ENCODE measurements at regions of chr7 and their contacts with region 1.

Region 1: DNA sequence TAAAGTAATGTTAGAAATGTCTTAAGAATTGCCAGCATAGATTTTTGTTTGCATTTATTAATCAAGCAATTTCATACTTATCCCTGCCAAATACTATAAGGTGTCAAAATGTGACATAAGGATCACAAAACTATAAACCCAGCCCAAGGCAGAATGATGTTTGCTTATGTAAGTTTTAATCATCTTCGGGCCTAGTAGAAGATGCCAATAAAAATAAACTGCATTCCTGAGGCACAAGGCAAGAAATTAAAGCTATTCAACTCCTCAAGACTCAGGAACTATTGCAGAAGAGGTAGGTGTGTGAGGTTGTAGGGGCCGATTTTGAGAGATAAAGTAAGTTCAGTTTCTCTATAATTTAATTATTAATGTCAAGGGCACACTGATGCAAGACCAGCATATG is 189.4 kb upstream of the AHR start:
- DNase-seq: no peak
- H3K4me3 ChIP-seq: no peak overlapping the region
- H3K27ac ChIP-seq: no peak overlapping the region
- H3K4me1 ChIP-seq: peaks cover 0 to 5% (median 2%) of the 10 kb centered on the region in 4 donors
- H3K27me3 ChIP-seq: no peaks in the 10 kb centered on the region
- CTCF ChIP-seq: no peak
- EP300 ChIP-seq: no peak
- POLR2A ChIP-seq: no peak

Region 2: DNA sequence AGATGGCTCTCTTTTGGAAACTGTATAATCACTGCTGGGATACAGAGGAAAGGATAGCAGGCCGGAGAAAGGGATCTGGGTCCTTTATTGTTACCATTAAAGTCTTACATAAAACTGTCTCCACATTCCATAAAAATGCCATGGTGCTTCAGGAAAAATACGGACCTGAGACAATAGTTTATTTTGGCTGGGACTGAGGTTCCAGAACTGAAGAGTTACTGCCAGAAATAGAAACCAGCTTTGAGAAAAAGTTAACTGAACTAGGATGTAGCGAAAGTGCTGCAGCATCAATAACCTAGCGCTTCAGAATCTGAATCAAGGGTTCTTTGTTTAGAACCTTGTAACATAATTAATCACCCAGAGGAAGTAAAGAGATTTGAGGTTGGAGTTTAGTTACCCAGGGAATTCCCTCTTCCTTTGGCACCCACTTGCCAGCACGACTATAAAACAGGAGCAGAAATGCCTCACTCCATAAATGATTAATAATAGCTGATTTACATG is 1460.5 kb before region 1 on chr7:
- in situ Hi-C with region 1: no loop called
- intact Hi-C with region 1: loop called (anchors 5 kb)
- DNase-seq: no peak
- H3K4me3 ChIP-seq: no peak overlapping the region
- H3K27ac ChIP-seq: peak overlapping the region in 3 of 4 donors; percentile 22 to 45 (median 37)
- H3K4me1 ChIP-seq: no peaks in the 10 kb centered on the region
- H3K27me3 ChIP-seq: no peaks in the 10 kb centered on the region
- CTCF ChIP-seq: no peak
- EP300 ChIP-seq: no peak
- POLR2A ChIP-seq: no peak

Region 3: DNA sequence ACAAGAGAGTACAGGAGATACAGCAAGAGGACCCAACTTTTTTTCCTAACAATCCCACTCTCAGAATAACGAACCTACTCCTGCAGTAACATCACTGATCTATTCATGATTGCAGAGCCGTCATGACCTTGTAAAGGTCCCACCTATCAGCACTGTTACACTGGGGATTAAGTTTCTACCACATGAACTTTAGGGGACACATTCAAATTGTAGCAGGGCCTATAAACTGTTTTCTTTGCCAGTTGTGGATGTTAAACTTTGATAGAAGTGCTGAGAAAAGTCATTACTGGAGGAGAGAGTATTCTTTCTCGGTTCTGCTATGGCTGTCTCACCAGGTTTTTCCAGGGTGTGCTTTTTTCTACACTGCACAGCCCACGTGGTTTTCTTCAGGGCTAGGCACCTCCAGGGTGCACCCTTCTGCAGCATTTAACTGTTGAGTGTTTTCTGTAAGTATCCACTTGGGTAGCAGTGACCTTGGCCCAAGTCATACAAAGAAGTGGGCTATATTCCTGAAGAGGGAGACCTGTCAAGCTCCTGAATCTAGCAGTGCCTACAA is 57.9 kb after region 1 on chr7:
- in situ Hi-C with region 1: no loop called
- intact Hi-C with region 1: no loop called
- DNase-seq: no peak
- H3K4me3 ChIP-seq: no peak overlapping the region
- H3K27ac ChIP-seq: no peak overlapping the region
- H3K4me1 ChIP-seq: no peaks in the 10 kb centered on the region
- H3K27me3 ChIP-seq: no peaks in the 10 kb centered on the region
- CTCF ChIP-seq: no peak
- EP300 ChIP-seq: no peak
- POLR2A ChIP-seq: no peak

Region 4: DNA sequence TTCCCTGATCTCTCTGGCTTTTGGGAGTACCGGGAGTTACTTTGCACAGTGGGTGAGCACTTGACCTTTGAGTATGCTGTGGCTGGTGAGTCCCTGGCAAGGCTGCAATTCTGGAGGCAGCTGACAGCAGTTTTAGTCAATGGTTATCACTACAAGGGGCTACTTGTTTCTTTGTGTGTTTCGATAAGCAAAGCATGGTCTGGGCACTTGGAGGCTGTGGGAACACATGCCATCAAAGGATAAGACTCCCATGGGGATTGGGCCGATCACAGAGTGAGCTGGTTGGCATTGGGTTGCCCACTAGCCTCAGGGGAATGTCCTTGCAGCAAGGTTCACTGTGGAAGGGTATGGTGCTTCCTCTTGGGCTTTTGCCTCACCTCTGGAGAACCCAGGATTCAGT is 623.1 kb after region 1 on chr7:
- in situ Hi-C with region 1: no loop called
- intact Hi-C with region 1: loop called (anchors 5 kb)
- DNase-seq: no peak
- H3K4me3 ChIP-seq: no peak overlapping the region
- H3K27ac ChIP-seq: no peak overlapping the region
- H3K4me1 ChIP-seq: no peaks in the 10 kb centered on the region
- H3K27me3 ChIP-seq: no peaks in the 10 kb centered on the region
- CTCF ChIP-seq: no peak
- EP300 ChIP-seq: no peak
- POLR2A ChIP-seq: no peak